ENCODE measurements at regions of chr10 and their contacts with region 1.

Region 1: GRCh38 chr10:90751107-90751997 is 106.5 kb downstream of the HTR7 start:
- DNase-seq: peak; percentile 42
- ATAC-seq: peak; percentile 80
- H3K4me3 ChIP-seq: no peak overlapping the region
- H3K27ac ChIP-seq: no peak overlapping the region
- H3K4me1 ChIP-seq: no peaks in the 10 kb centered on the region
- H3K27me3 ChIP-seq: peaks cover 2% of the 10 kb centered on the region
- CTCF ChIP-seq: peak; percentile 69
- POLR2A ChIP-seq: no peak
- RAD21 ChIP-seq: peak; percentile 71

Region 2: GRCh38 chr10:90096196-90096595 is 655.2 kb before region 1 on chr10:
- CTCF ChIA-PET with region 1: no interaction called
- POLR2A ChIA-PET with region 1: no interaction called
- dilution Hi-C with region 1: no loop called
- in situ Hi-C with region 1: no loop called
- intact Hi-C with region 1: no loop called
- DNase-seq: no peak
- ATAC-seq: no peak
- H3K4me3 ChIP-seq: no peak overlapping the region
- H3K27ac ChIP-seq: no peak overlapping the region
- H3K4me1 ChIP-seq: no peaks in the 10 kb centered on the region
- H3K27me3 ChIP-seq: no peaks in the 10 kb centered on the region
- CTCF ChIP-seq: no peak
- POLR2A ChIP-seq: no peak
- RAD21 ChIP-seq: no peak

Region 3: DNA sequence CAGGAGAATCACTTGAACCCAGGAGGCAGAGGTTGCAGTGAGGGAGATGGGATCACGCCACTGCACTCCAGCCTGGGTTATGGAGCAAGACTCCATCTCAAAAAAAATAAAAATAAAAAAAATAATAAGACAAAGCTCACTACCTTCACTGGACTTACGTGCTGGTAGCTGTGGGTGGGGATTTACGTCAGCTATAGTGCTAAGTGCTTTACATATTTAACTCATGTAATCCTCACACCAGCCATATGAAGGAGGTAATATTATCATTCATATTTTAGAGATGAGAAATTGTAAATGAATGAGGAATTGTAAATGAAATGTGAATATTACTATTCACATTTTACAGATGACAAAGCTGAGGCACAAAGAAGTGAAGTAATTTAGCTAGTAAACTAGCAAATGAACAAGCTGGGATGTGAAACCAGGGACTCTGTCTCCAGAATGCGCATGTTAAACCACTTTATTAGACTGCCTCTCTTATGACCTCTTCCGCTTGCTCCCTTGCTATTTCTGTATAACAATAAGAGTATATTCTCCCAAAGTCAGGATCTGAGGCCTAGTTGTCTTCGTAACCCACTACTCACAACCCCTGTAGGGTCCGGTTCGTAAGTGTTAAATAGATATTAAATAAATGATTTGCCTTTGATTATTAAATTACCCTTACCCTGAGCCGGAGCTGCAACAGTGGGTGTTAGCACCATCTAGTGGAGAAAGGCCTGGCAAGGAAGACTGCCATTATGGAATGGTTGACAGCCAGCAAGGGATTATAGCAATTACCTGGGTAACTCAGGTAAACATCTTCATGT is 36.2 kb after region 1 on chr10:
- CTCF ChIA-PET with region 1: interaction called, 17 read pairs
- POLR2A ChIA-PET with region 1: no interaction called
- dilution Hi-C with region 1: no loop called
- in situ Hi-C with region 1: no loop called
- intact Hi-C with region 1: loop called (anchors 2 kb)
- DNase-seq: peak; percentile 30
- ATAC-seq: peak; percentile 72
- H3K4me3 ChIP-seq: no peak overlapping the region
- H3K27ac ChIP-seq: no peak overlapping the region
- H3K4me1 ChIP-seq: no peaks in the 10 kb centered on the region
- H3K27me3 ChIP-seq: peaks cover 4% of the 10 kb centered on the region
- CTCF ChIP-seq: peak; percentile 71
- POLR2A ChIP-seq: no peak
- RAD21 ChIP-seq: peak; percentile 67

Region 4: DNA sequence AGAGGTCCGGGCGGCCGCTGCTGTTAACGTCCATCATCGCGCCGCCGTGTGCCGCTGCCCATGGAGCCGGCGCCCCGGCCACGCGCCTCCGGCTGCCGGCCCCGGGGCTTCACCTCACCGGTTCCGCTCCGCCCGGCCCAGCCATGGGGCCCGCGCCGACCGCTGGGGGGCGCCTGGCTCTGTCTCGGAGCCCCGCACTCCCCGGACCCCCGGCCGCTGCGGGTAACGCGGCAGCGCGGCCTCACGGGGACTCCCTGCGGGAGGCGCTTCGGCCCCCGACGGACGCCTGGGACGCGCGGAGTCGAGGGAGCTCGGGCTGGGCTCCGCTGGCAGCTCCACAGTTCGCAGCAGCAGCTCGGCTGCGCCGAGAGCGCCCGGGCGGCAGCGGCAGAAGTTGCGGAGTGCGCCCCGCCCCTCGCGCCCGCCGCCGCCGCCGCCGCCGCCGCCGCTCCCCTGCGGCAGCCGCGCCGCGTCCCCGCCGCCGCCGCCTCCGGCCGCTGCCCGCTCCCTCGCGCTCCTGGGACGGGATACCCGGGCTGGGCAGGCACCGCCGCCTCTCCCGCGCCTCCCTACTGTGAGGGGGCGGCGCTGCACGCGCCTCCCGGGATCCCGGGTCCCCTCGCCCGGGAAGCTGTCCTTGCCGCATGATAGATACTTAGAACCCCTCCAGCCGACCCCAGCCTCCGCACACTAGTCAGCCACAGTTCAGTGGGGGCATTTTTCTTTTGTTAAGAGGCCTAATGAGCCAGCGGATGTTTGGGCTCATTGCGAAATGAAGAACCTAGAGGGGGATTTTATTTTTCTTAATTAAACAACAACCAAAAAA is 106.5 kb after region 1 on chr10 and contains the start of gene HTR7:
- CTCF ChIA-PET with region 1: interaction called, 8 read pairs
- POLR2A ChIA-PET with region 1: interaction called, 20 read pairs
- dilution Hi-C with region 1: no loop called
- in situ Hi-C with region 1: no loop called
- intact Hi-C with region 1: loop called (anchors 1 kb)
- DNase-seq: peak; percentile 33
- ATAC-seq: peak; percentile 84
- H3K4me3 ChIP-seq: peak within 1 kb of the TSS; percentile 80
- H3K27ac ChIP-seq: peak within 1 kb of the TSS; percentile 44
- H3K4me1 ChIP-seq: no peaks in the 10 kb centered on the region
- H3K27me3 ChIP-seq: peaks cover 17% of the 10 kb centered on the region
- CTCF ChIP-seq: peak; percentile 49
- POLR2A ChIP-seq: no peak
- RAD21 ChIP-seq: no peak
- total RNA-seq, gene HTR7: 0.56 and 0.72 TPM in 2 replicates

Region 5: GRCh38 chr10:90862908-90863514 is 111.7 kb after region 1 on chr10:
- CTCF ChIA-PET with region 1: interaction called, 12 read pairs
- POLR2A ChIA-PET with region 1: no interaction called
- dilution Hi-C with region 1: no loop called
- in situ Hi-C with region 1: loop called (anchors 5 kb)
- intact Hi-C with region 1: loop called (anchors 1 kb)
- DNase-seq: peak; percentile 47
- ATAC-seq: peak; percentile 30; the same call in 1 of the 2 replicates
- H3K4me3 ChIP-seq: no peak overlapping the region
- H3K27ac ChIP-seq: no peak overlapping the region
- H3K4me1 ChIP-seq: no peaks in the 10 kb centered on the region
- H3K27me3 ChIP-seq: peaks cover 21% of the 10 kb centered on the region
- CTCF ChIP-seq: peak; percentile 89
- POLR2A ChIP-seq: no peak
- RAD21 ChIP-seq: peak; percentile 83

Region 6: GRCh38 chr10:90871766-90872647 is 120.7 kb after region 1 on chr10 and contains the start of gene RPP30:
- CTCF ChIA-PET with region 1: no interaction called
- POLR2A ChIA-PET with region 1: no interaction called
- dilution Hi-C with region 1: no loop called
- in situ Hi-C with region 1: loop called (anchors 5 kb)
- intact Hi-C with region 1: loop called (anchors 2 kb)
- DNase-seq: peak; percentile 74
- ATAC-seq: peak; percentile 99
- H3K4me3 ChIP-seq: peak within 1 kb of the TSS; percentile 89
- H3K27ac ChIP-seq: peak within 1 kb of the TSS; percentile 77
- H3K4me1 ChIP-seq: peaks cover 2% of the 10 kb centered on the region; the same call in 1 of the 2 replicates
- H3K27me3 ChIP-seq: peaks cover 13% of the 10 kb centered on the region
- CTCF ChIP-seq: no peak
- POLR2A ChIP-seq: no peak
- RAD21 ChIP-seq: no peak
- total RNA-seq, gene RPP30: 45.2 and 45.8 TPM in 2 replicates